ENCODE measurements at regions of chrX and their contacts with region 1.

Region 1: DNA sequence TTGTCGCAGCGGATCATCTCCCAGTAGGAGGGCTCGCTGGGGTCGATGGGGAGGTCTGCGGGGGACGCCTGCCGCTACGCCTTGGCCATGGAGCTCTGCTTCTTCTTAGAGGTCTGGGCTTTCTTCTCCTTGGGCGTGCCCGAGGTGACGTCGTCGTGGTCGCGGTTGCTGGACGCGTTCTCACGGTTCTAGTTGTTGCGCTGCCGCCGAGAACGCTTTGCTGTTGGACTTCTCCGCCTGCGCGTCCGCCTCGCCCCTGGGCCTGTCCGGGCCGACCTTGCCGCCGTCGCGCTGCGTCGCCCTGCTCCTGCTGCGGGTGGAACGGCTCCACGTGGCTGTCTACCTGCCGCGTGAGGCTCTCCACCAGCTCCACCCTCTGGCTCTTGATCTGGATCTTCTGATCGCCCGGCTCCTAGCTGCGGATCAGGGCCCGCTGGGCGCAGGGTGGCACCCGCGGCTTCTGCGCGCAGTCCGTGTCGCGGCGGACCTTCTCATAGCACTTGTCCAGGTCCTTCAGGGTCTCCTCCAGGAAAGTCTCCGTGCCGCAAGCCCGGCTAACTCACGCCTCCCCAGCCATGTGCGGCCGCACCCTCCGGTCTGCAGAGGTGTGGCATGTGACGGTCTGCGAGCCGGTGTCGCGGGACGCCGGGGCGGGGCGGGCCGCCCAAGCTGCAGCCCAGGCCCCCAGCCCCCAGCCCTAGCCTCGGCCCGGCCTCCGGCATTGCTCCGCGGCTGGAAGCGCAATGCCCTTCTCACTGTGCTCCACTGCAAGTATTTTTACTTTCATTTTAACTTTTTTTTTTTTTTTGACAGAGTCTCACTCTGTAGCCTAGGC is 40.5 kb upstream of the OGT start:
- DNase-seq: peak; percentile 68
- ATAC-seq: peak; percentile 72

Region 2: GRCh38 chrX:70279081-70279480 is 1213.4 kb before region 1 on chrX:
- intact Hi-C with region 1: no loop called
- DNase-seq: no peak
- ATAC-seq: no peak

Region 3: DNA sequence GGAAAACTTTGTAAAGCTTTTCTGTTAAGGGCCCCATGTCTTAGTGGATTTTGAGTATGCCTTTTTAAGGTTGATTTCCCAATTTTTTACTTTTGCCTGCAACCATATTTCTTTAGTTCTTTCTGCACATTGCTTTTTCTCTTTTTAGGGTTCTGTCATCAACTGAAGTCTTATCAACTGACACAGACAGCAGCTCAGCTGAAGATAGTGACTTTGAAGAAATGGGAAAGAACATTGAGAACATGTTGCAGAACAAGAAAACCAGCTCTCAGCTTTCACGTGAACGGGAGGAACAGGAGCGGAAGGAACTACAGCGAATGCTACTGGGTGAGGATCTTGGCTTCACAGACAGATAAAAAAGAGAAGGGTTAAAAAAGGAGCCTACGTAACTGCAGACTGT is 98.5 kb before region 1 on chrX:
- intact Hi-C with region 1: no loop called
- DNase-seq: no peak
- ATAC-seq: no peak

Region 4: DNA sequence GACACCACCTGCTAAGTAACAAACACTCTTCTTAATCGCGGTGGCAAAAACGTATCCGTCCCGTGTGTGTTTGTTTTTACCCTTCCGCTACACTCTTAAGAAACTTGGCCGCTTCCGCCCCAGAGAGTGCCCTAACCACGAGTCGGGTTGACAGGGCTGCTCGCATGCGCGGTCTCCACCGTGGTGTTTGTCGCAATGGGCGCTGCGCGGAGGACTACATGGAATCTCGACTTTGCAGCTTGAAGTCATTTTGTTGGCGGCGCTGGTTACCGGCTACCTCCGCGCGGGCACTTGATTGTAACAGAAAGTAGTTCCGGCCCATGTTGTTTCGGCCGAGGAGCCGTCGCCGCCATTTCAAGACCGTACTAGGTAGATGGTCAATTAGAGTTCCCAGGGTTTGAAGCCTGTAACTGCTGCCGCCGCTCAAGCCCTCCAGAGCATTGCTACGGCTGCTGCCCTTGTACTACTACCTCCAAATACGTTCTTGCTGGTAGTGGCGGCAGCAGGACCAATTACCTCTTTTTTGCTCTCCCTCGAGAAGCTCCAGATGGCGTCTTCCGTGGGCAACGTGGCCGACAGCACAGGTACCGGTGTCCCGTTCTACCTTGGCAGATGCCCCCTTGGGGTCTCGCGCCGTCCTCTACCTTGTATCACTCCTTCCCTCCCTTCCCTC is 40.4 kb after region 1 on chrX and contains the start of gene OGT:
- intact Hi-C with region 1: loop called (anchors 5 kb)
- DNase-seq: peak; percentile 97
- ATAC-seq: peak; percentile 96
- total RNA-seq, gene OGT: 78.6 TPM

Region 5: DNA sequence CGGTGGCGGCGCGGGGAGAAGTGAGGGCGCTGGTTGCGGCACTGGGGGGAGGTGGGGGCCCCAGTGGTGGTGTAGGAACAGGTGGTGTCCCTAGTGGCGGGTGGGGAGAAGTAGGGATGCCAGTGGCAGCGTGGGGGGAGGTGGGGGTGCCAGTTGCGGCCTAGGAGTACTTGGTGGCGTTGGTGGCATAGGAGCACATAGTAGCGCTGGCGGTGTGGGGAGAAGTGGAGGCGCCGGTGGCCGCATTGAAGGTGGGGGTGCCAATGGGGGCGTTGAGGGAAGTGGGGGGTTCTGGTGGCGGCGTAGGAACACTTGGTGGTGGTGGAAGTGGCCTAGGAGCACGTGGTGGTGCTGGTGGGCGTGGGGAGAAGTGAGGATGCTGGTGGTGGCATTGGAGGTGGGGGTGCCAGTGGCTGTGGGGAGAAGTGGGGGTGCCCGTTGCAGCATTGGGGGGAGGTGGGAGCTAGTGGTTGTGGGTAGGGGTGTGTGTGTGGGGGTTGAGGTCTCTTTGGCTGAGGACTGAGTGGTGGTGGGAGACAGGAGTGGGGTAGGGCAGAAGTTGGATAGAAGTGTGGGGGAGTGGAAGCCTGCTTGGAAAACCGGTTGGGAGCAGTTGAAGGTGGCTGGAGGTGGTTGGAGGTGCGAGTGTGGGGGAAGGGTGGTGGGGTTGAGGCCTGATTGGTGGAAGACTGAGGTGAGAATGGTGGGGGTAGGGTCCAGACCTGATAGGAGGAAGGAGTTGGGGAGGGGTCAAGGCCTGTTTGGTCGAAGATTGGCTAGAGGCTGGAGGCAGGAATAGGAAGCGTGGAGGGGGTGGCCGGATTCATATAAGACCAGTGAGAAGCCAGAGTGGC is 86.9 kb after region 1 on chrX:
- intact Hi-C with region 1: no loop called
- DNase-seq: no peak
- ATAC-seq: no peak